ENCODE measurements at regions of chr1 and their contacts with region 1.

Region 1: GRCh38 chr1:154558575-154559465 is at the start of gene UBE2Q1:
- DNase-seq: peak; percentile 96
- ATAC-seq: peak; percentile 92
- H3K4me3 ChIP-seq: peak within 1 kb of the TSS; percentile 91 to 96 (median 95)
- H3K27ac ChIP-seq: peak within 1 kb of the TSS; percentile 76
- H3K4me1 ChIP-seq: peaks cover 34% of the 10 kb centered on the region
- H3K27me3 ChIP-seq: no peaks in the 10 kb centered on the region; a peak in 1 of 5 replicates
- CTCF ChIP-seq: 0 out of 2 replicates have a peak, but pooled peaks have one; percentile 19
- EP300 ChIP-seq: peak in 1 of 2 experiments; percentile 35; a peak in 1 of 4 replicates
- POLR2A ChIP-seq: peak; percentile 42 to 65; a peak in 3 of 4 replicates
- RAD21 ChIP-seq: 0 out of 2 replicates have a peak, but pooled peaks have one; percentile 30
- total RNA-seq, gene UBE2Q1: 37.9 and 41.7 TPM in 2 replicates

Region 2: DNA sequence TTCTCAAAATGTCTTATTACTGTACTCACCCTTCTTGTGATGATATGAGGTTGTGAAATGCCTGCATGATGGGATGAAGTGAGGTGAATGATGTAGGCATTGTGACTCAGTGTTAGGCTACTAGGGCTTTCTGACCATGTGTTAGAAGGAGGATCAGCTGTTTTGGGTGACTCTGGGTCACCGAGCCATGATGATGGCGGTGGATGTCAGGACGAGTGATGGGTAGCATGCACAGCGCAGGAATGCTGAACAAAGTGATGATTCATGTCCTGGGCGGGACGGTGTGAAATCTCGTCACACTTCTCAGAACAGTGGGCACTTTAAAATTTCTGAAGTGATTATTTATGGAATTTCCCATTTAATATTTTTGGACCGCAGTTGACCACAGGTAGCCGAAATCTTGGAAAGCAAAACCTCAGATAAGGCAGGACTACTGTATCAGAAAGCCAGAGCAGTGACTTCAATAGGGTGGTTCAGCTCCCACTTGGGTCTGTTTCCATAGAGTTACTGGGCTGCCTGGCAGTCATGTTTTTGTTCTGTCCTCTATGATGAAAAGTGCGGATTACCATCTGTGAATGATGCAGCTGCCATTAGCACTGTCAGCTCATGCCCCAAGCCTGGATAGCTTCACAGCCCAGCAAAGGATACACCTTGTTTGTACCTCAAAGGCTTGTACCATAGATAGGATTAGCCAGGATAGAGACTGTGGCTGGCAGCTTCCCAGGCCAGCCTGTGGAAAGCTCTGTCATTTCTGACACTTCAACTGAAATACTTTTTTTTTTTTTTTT is 127.0 kb before region 1 on chr1:
- CTCF ChIA-PET with region 1: no interaction called
- POLR2A ChIA-PET with region 1: no interaction called
- in situ Hi-C with region 1: no loop called
- intact Hi-C with region 1: no loop called
- DNase-seq: no peak
- ATAC-seq: no peak
- H3K4me3 ChIP-seq: no peak overlapping the region
- H3K27ac ChIP-seq: no peak overlapping the region
- H3K4me1 ChIP-seq: peaks cover 25% of the 10 kb centered on the region
- H3K27me3 ChIP-seq: no peaks in the 10 kb centered on the region
- CTCF ChIP-seq: no peak
- EP300 ChIP-seq: no peak
- POLR2A ChIP-seq: no peak
- RAD21 ChIP-seq: no peak

Region 3: GRCh38 chr1:154501423-154502065 is 57.3 kb before region 1 on chr1:
- CTCF ChIA-PET with region 1: no interaction called
- POLR2A ChIA-PET with region 1: no interaction called
- in situ Hi-C with region 1: no loop called
- intact Hi-C with region 1: no loop called
- DNase-seq: no peak
- ATAC-seq: peak; percentile 76
- H3K4me3 ChIP-seq: peak overlapping the region in 1 of 3 experiments; percentile 52; a peak in 1 of 6 replicates
- H3K27ac ChIP-seq: no peak overlapping the region
- H3K4me1 ChIP-seq: peaks cover 8% of the 10 kb centered on the region
- H3K27me3 ChIP-seq: peaks cover 4 to 20% of the 10 kb centered on the region in 2 experiments
- CTCF ChIP-seq: no peak
- EP300 ChIP-seq: no peak
- POLR2A ChIP-seq: no peak
- RAD21 ChIP-seq: no peak

Region 4: DNA sequence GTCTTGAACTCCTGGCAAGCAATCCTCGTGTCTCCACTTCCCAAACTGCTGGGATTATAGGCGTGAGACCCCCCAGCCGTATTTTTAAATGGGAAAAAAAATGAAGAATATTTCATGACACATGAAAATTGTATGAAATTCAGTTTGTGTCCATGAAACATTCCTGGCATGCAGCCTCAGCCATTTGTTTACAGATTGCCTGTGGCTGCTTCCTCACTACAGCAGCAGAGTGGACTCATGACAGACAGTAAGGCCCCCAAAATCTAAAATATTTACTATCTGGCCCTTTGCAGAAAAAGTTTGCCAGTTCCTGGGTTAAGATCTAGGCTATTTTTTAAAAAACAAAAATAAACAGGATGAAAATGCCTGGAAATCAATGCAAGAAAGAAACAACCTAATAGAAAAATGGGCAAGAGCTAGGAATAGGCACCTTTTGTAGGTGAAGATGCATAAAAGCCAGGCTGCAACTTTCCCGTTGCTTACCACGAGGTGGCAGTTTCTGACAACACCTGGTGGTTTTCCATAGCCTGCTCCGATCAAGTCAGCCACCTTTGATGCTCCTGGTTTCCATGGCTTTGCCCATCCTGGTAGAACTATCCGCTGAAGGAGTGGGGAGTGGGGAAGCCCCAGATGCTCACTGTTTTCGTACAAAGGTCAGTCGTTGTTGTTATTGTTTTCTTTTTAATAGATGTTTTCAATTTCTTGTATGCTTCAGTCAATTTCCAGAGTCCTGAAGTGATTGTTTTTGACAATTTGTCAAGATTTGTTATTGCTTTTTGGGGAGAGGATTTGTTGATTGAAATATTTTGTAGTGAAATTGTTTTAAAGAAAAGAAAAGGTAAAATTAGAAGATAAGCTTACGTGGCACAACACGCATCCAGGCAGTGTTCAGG is 24.6 kb before region 1 on chr1:
- CTCF ChIA-PET with region 1: no interaction called
- POLR2A ChIA-PET with region 1: no interaction called
- in situ Hi-C with region 1: no loop called
- intact Hi-C with region 1: no loop called
- DNase-seq: peak; percentile 59
- ATAC-seq: peak; percentile 82
- H3K4me3 ChIP-seq: no peak overlapping the region
- H3K27ac ChIP-seq: no peak overlapping the region
- H3K4me1 ChIP-seq: no peaks in the 10 kb centered on the region
- H3K27me3 ChIP-seq: no peaks in the 10 kb centered on the region
- CTCF ChIP-seq: peak; percentile 81
- EP300 ChIP-seq: no peak
- POLR2A ChIP-seq: no peak
- RAD21 ChIP-seq: peak; percentile 49; the same call in 1 of the 2 replicates

Region 5: GRCh38 chr1:154583773-154584172 is 25.0 kb after region 1 on chr1:
- CTCF ChIA-PET with region 1: no interaction called
- POLR2A ChIA-PET with region 1: no interaction called
- in situ Hi-C with region 1: no loop called
- intact Hi-C with region 1: loop called (anchors 1 kb)
- DNase-seq: no peak
- ATAC-seq: no peak
- H3K4me3 ChIP-seq: no peak overlapping the region
- H3K27ac ChIP-seq: no peak overlapping the region
- H3K4me1 ChIP-seq: no peaks in the 10 kb centered on the region
- H3K27me3 ChIP-seq: no peaks in the 10 kb centered on the region
- CTCF ChIP-seq: no peak
- EP300 ChIP-seq: no peak
- POLR2A ChIP-seq: no peak
- RAD21 ChIP-seq: no peak

Region 6: DNA sequence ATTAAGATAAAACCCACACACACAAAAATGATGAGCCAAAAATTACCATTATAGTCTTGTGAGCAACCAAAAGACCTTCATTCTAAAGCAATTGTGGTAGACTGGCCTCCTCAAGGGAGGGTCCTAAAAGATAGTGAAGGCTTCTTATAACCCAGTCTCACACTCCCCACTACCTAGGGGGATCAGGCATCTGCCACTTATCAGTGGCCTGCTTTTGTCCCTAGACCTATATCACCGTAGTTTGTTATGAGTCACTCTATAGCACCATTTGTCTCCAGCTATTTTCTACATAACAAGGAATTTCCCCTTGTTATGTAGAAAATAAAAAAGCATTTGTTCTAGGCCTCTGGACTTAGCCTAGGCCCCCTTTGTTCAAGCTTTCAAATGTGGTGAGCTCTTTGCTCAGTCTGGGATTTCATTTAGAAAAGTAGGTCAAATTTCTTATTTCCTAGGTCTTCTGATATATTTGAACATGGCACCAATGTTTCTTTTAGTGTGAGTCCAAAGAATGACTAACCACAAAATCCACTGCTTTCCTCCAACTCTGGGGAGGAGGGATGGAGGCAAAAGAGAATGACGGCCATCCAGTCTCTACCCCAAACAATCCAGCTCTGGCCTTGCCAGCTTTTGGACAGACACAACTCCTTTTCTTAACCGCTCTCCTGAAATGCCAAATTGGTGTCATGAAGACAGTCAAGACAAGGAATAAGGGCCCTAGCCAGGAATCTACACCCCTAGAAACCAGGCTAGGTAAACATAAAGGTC is 40.2 kb after region 1 on chr1:
- CTCF ChIA-PET with region 1: no interaction called
- POLR2A ChIA-PET with region 1: no interaction called
- in situ Hi-C with region 1: no loop called
- intact Hi-C with region 1: no loop called
- DNase-seq: no peak
- ATAC-seq: no peak
- H3K4me3 ChIP-seq: no peak overlapping the region
- H3K27ac ChIP-seq: no peak overlapping the region
- H3K4me1 ChIP-seq: 0 out of 2 replicates have a peak, but pooled peaks cover under 1% of the 10 kb centered on the region
- H3K27me3 ChIP-seq: no peaks in the 10 kb centered on the region
- CTCF ChIP-seq: no peak
- EP300 ChIP-seq: no peak
- POLR2A ChIP-seq: no peak
- RAD21 ChIP-seq: no peak

Region 7: GRCh38 chr1:154627257-154628120 is 68.7 kb after region 1 on chr1:
- CTCF ChIA-PET with region 1: interaction called, 3 read pairs
- POLR2A ChIA-PET with region 1: interaction called, 5 read pairs
- in situ Hi-C with region 1: no loop called
- intact Hi-C with region 1: loop called (anchors 1 kb)
- DNase-seq: peak; percentile 84
- ATAC-seq: peak; percentile 87
- H3K4me3 ChIP-seq: peak overlapping the region; percentile 80 to 99 (median 97)
- H3K27ac ChIP-seq: peak overlapping the region; percentile 94
- H3K4me1 ChIP-seq: peaks cover 26% of the 10 kb centered on the region
- H3K27me3 ChIP-seq: no peaks in the 10 kb centered on the region; a peak in 1 of 5 replicates
- CTCF ChIP-seq: peak; percentile 1; the same call in 1 of the 2 replicates
- EP300 ChIP-seq: 0 out of 4 replicates have a peak, but pooled peaks of 1 of the 2 experiments have one; percentile 25
- POLR2A ChIP-seq: peak; percentile 53 to 58
- RAD21 ChIP-seq: no peak

Region 8: DNA sequence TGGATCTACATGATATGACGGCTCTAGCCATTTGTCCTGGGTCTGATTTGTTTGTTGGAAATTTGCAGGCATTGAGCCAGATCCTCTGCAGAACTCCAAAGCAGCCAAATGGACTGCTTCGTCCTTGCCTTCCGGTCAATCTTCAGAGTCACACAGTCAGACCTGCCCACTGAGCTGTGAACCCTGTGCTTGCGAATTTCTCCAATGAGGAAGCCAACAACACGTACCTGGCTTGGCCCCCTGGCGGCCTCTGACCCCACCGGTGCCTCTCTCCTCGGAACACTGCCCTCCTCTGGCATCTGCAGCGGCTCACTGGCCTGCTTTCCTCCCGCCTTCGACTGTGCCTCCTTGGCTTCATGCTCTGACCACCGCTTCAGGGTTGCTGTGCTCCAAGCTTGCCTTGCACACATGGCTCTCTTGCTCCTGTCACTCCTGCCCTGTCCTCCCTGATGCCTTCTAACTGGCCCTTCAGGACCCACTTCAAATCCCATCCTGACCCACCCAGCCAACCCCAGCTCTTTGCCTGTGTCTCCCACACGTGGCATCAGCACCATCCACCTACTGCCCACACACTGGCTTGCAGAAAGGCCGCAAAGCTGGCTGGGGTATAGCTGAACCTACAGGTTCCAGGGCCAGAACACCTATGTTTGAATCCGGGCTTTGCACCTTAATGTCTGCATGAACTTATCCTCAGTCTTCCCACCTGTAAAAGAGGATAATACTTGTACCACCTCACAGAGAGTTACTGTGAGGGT is 183.1 kb after region 1 on chr1:
- CTCF ChIA-PET with region 1: interaction called, 13 read pairs
- POLR2A ChIA-PET with region 1: interaction called, 4 read pairs
- in situ Hi-C with region 1: no loop called
- intact Hi-C with region 1: no loop called
- DNase-seq: peak; percentile 63
- ATAC-seq: peak; percentile 98
- H3K4me3 ChIP-seq: no peak overlapping the region
- H3K27ac ChIP-seq: no peak overlapping the region
- H3K4me1 ChIP-seq: 0 out of 2 replicates have a peak, but pooled peaks cover 13% of the 10 kb centered on the region
- H3K27me3 ChIP-seq: peaks cover 0 to 33% of the 10 kb centered on the region in 2 experiments; a peak in 2 of 5 replicates
- CTCF ChIP-seq: peak; percentile 91
- EP300 ChIP-seq: no peak
- POLR2A ChIP-seq: no peak
- RAD21 ChIP-seq: peak; percentile 75; the same call in 1 of the 2 replicates

Region 9: DNA sequence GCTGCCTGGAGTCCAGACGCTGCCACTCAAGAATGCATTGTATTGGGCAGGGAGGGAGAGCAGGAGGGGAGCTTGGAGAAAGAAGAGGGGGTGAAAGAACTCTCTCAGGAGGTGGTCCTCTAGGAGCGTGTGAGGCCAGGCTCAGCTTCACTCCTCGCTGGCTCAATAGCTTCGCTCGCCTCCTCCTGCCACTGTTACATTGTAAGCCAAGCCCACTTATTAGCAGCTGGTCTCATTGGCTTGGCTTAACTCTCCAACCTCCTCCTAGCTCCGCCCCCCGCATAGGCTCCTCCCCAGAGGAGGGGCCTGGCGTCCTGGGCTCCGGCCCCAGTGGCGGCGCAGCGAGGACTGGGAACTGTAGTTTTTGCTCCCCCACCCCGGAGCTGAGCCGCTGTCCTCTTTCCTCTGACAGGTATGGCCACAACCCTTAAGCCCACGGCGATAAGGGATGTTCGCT is 311.3 kb after region 1 on chr1 and contains the start of gene KCNN3:
- CTCF ChIA-PET with region 1: no interaction called
- POLR2A ChIA-PET with region 1: no interaction called
- in situ Hi-C with region 1: loop called (anchors 10 kb)
- intact Hi-C with region 1: no loop called
- DNase-seq: peak; percentile 68
- ATAC-seq: peak; percentile 98
- H3K4me3 ChIP-seq: peak within 1 kb of the TSS in 1 of 3 experiments; percentile 39; a peak in 1 of 6 replicates
- H3K27ac ChIP-seq: no peak within 1 kb of the TSS
- H3K4me1 ChIP-seq: peaks cover 18% of the 10 kb centered on the region
- H3K27me3 ChIP-seq: peaks cover 0 to 47% of the 10 kb centered on the region in 2 experiments; a peak in 4 of 5 replicates
- CTCF ChIP-seq: no peak
- EP300 ChIP-seq: no peak
- POLR2A ChIP-seq: no peak
- RAD21 ChIP-seq: no peak
- total RNA-seq, gene KCNN3: not detected in 2 replicates

Measured in HepG2 (cell line).